GM12878 (cell line): ENCODE measurements at regions of chr2 and their contacts with region 1.

Region 1: GRCh38 chr2:677056-677965 is at the start of gene TMEM18:
- DNase-seq: peak; percentile 97
- ATAC-seq: peak; percentile 66
- H3K4me3 ChIP-seq: peak within 1 kb of the TSS; percentile 81
- H3K27ac ChIP-seq: peak within 1 kb of the TSS; percentile 99
- H3K4me1 ChIP-seq: peaks cover 10% of the 10 kb centered on the region
- H3K27me3 ChIP-seq: no peaks in the 10 kb centered on the region
- CTCF ChIP-seq: peak; percentile 31 to 56 (median 38); a peak in 3 of 6 replicates
- EP300 ChIP-seq: 0 out of 4 replicates have a peak, but pooled peaks of 1 of the 2 experiments have one; percentile 33
- POLR2A ChIP-seq: peak; percentile 96
- RAD21 ChIP-seq: no peak; the same call in 1 of the 2 replicates
- polyA plus RNA-seq, gene TMEM18: 52.0 to 56.3 TPM

Region 2: DNA sequence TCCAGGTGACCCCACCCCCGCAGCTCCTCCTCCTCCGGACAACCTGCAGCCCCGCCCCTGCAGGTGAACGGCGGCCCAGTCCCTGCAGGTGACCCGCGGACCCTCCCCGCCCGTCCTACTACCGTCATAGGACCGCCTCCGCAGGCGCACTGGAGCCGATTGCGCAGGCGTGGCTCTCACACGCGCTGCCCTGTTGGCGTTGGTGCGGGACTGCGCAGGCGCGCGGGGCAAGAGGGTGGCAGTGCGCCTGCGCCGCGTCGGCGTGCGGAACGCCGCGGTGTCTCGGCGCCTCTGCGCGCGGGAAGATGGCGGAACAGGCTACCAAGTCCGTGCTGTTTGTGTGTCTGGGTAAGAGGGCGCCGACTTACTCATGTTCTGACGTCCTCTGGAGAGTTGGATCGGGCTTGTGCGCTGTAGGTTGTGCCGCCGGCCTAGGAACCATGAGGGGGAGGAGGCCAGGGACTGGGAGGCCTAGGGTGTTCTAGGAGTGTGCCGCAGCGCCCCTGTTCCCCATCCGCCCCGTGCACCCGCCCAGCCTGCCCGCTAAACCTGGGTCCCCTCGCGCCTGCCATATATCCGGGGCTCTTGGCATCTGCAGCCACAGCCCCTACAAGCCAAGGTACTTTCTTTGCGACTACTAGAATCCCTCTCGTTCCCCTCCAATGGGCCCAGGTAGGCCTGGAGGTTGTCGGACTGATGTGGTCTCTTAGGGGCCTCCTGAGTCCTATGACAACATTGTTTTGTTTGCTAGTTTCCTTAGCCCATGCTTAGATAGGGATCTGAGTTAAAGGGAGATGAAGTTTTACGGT is 412.4 kb before region 1 on chr2 and contains the start of gene ACP1:
- CTCF ChIA-PET with region 1: no interaction called
- POLR2A ChIA-PET with region 1: no interaction called
- RAD21 ChIA-PET with region 1: no interaction called
- SMC1A ChIA-PET with region 1: no interaction called
- in situ Hi-C with region 1: loop called (anchors 5 kb)
- intact Hi-C with region 1: no loop called
- DNase-seq: peak; percentile 80
- ATAC-seq: peak; percentile 93
- H3K4me3 ChIP-seq: peak within 1 kb of the TSS; percentile 99
- H3K27ac ChIP-seq: peak within 1 kb of the TSS; percentile 83
- H3K4me1 ChIP-seq: no peaks in the 10 kb centered on the region; the same call in 1 of the 2 replicates
- H3K27me3 ChIP-seq: no peaks in the 10 kb centered on the region
- CTCF ChIP-seq: no peak
- EP300 ChIP-seq: no peak
- POLR2A ChIP-seq: peak; percentile 94
- RAD21 ChIP-seq: no peak
- polyA plus RNA-seq, gene ACP1: 362 to 468 TPM

Region 3: GRCh38 chr2:723761-724160 is 46.5 kb after region 1 on chr2:
- CTCF ChIA-PET with region 1: no interaction called
- POLR2A ChIA-PET with region 1: no interaction called
- RAD21 ChIA-PET with region 1: no interaction called
- SMC1A ChIA-PET with region 1: no interaction called
- in situ Hi-C with region 1: no loop called
- intact Hi-C with region 1: no loop called
- DNase-seq: no peak
- ATAC-seq: no peak
- H3K4me3 ChIP-seq: no peak overlapping the region
- H3K27ac ChIP-seq: no peak overlapping the region
- H3K4me1 ChIP-seq: peaks cover 13% of the 10 kb centered on the region
- H3K27me3 ChIP-seq: 0 out of 4 replicates have a peak, but pooled peaks cover 0 to 3% of the 10 kb centered on the region in 2 experiments
- CTCF ChIP-seq: no peak
- EP300 ChIP-seq: no peak
- POLR2A ChIP-seq: no peak
- RAD21 ChIP-seq: no peak